Naive thymus-derived CD4-positive, alpha-beta T cell (primary cell): ENCODE measurements at regions of chr4 and their contacts with region 1.

Region 1: DNA sequence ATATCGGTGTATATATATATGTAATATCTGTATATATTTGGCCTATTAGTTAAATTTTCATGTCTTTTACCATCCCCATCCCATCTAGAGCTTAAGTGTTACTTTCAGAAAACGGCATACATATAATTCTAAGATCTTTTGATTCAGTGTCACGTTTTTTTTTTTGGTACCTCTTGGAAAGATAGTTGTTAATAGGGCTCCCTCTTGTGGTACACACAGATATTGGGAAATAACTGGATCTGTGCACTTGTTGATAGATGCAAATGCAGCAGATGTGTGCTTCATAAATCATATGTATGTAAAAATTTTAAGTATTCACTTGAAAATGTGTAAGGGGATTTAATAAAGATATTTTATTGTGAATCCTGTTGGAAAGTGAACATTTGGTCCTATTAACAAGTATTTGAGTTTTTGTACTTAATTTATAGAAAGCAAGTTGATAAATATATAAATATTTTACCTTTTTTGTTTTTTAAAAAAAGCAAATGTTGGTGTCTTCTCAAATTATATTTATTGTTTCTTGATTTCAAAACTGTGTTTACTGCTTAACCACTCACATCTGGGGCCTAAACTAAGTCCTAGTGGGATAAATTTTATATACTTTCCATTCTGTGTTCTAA is 74.7 kb downstream of the PAQR3 start:
- DNase-seq: peak in 7 of 9 donors; percentile 55 to 79 (median 70)
- ATAC-seq: peak; percentile 81
- H3K4me3 ChIP-seq: no peak overlapping the region
- H3K4me3 Mint-ChIP-seq: no peak overlapping the region
- H3K27ac ChIP-seq: no peak overlapping the region
- H3K27ac Mint-ChIP-seq: peak overlapping the region in 1 of 9 donors; percentile 33
- H3K4me1 ChIP-seq: no peaks in the 10 kb centered on the region
- H3K4me1 Mint-ChIP-seq: peaks cover 0 to 6% (median 4%) of the 10 kb centered on the region in 7 donors
- H3K27me3 ChIP-seq: no peaks in the 10 kb centered on the region
- H3K27me3 Mint-ChIP-seq: no peaks in the 10 kb centered on the region

Region 2: GRCh38 chr4:77959566-77960338 is 904.8 kb before region 1 on chr4:
- CTCF ChIA-PET with region 1: interaction called, 3 read pairs
- POLR2A ChIA-PET with region 1: no interaction called
- intact Hi-C with region 1: loop called (anchors 1 kb)
- DNase-seq: peak in 5 of 9 donors; percentile 10 to 40 (median 24)
- ATAC-seq: no peak
- H3K4me3 ChIP-seq: no peak overlapping the region
- H3K4me3 Mint-ChIP-seq: no peak overlapping the region
- H3K27ac ChIP-seq: no peak overlapping the region
- H3K27ac Mint-ChIP-seq: no peak overlapping the region
- H3K4me1 ChIP-seq: no peaks in the 10 kb centered on the region
- H3K4me1 Mint-ChIP-seq: peaks cover 0 to 8% (median 6%) of the 10 kb centered on the region in 7 donors
- H3K27me3 ChIP-seq: no peaks in the 10 kb centered on the region
- H3K27me3 Mint-ChIP-seq: peaks cover 0 to 3% (median 0%) of the 10 kb centered on the region in 5 donors

Region 3: GRCh38 chr4:78056265-78057129 is 808.0 kb before region 1 on chr4:
- CTCF ChIA-PET with region 1: no interaction called
- POLR2A ChIA-PET with region 1: no interaction called
- intact Hi-C with region 1: loop called (anchors 5 to 10 kb)
- DNase-seq: peak in 5 of 9 donors; percentile 10 to 30 (median 17)
- ATAC-seq: peak; percentile 51
- H3K4me3 ChIP-seq: peak overlapping the region; percentile 57
- H3K4me3 Mint-ChIP-seq: peak overlapping the region; percentile 84 to 96 (median 86)
- H3K27ac ChIP-seq: no peak overlapping the region
- H3K27ac Mint-ChIP-seq: peak overlapping the region in 1 of 9 donors; percentile 16
- H3K4me1 ChIP-seq: peaks cover 10 to 14% of the 10 kb centered on the region in 2 donors
- H3K4me1 Mint-ChIP-seq: peaks cover 24 to 33% (median 26%) of the 10 kb centered on the region in 7 donors
- H3K27me3 ChIP-seq: peaks cover 3 to 18% of the 10 kb centered on the region in 2 donors
- H3K27me3 Mint-ChIP-seq: peaks cover 66 to 78% (median 69%) of the 10 kb centered on the region in 5 donors

Region 4: DNA sequence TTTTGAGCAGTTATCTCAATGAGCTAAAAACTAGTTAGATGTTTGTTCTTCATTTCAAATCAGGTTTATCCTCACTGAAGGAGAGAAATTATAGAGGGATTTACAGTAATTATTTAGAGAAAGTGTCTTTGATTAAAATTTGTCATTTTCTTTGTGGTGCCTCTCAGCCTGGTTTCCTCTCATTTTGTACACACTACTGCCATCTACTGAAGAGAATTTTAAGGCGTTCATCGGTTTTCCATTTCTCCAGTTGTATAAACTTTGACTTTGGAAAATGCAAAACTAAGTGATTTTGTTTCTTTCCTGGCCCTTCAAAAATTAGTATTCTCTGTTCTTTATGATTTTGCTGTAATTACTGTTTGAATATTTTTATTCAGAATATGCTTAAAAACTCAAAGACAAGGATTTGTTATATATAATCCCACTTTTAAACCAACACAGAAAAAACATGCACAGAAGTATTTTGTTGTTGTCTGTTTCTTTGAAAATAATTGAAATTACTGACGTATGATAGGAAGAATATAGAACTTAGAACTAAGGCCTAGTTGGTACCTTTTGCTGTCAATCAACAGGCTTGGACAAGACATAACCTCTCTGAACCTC is 347.4 kb before region 1 on chr4:
- CTCF ChIA-PET with region 1: no interaction called
- POLR2A ChIA-PET with region 1: no interaction called
- intact Hi-C with region 1: loop called (anchors 10 kb)
- DNase-seq: no peak
- ATAC-seq: no peak
- H3K4me3 ChIP-seq: no peak overlapping the region
- H3K4me3 Mint-ChIP-seq: no peak overlapping the region
- H3K27ac ChIP-seq: no peak overlapping the region
- H3K27ac Mint-ChIP-seq: no peak overlapping the region
- H3K4me1 ChIP-seq: no peaks in the 10 kb centered on the region
- H3K4me1 Mint-ChIP-seq: no peaks in the 10 kb centered on the region
- H3K27me3 ChIP-seq: no peaks in the 10 kb centered on the region
- H3K27me3 Mint-ChIP-seq: peaks cover 0 to 29% (median 6%) of the 10 kb centered on the region in 5 donors

Region 5: DNA sequence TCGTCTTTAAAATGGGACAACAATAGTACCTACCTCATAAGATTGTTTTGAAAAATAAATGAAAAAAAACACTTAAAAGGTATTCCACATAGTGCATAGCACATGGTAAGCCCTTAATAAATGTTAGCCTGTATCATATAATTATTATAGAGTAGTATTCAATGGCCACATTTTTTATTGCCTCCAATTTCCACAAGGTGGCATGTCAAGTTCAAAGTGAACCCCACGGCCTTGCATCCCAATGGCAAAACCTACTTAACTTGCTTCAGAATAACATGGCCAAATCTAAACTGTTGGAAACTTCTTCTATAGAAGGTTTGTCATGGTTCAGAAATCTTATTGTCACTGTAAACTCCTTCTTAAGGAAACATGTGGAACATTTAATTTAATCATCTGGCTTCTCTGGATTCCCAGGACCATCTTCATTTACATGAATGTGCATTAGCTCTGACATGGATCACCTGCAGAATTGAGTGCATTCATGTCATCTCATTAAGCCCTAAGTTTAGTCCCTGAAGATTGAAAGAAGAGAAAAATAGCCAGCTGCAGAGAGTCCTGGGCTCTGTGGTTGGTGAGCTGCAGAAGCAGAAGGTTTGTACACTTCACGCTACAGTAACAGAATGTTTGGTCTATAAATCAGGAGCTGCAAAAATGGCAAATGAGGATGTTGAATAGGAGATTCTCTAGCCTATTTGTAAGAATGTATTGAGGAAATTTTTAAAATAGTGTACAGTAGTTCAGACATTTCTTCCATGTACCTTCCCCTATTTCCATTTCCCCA is 251.9 kb before region 1 on chr4:
- CTCF ChIA-PET with region 1: interaction called, 8 read pairs
- POLR2A ChIA-PET with region 1: no interaction called
- intact Hi-C with region 1: loop called (anchors 1 kb)
- DNase-seq: no peak
- ATAC-seq: peak; percentile 47
- H3K4me3 ChIP-seq: no peak overlapping the region
- H3K4me3 Mint-ChIP-seq: peak overlapping the region in 1 of 10 donors; percentile 39
- H3K27ac ChIP-seq: no peak overlapping the region
- H3K27ac Mint-ChIP-seq: peak overlapping the region in 4 of 9 donors; percentile 16 to 66 (median 57)
- H3K4me1 ChIP-seq: peaks cover 0 to 36% of the 10 kb centered on the region in 2 donors
- H3K4me1 Mint-ChIP-seq: peaks cover 13 to 76% (median 55%) of the 10 kb centered on the region in 7 donors
- H3K27me3 ChIP-seq: no peaks in the 10 kb centered on the region
- H3K27me3 Mint-ChIP-seq: no peaks in the 10 kb centered on the region

Region 6: GRCh38 chr4:78720994-78721677 is 143.4 kb before region 1 on chr4:
- CTCF ChIA-PET with region 1: no interaction called
- POLR2A ChIA-PET with region 1: no interaction called
- intact Hi-C with region 1: loop called in 1 of 2 experiments (anchors 5 kb)
- DNase-seq: peak in 8 of 9 donors; percentile 11 to 38 (median 24)
- ATAC-seq: peak; percentile 68
- H3K4me3 ChIP-seq: peak overlapping the region; percentile 24
- H3K4me3 Mint-ChIP-seq: peak overlapping the region; percentile 43 to 79 (median 70)
- H3K27ac ChIP-seq: no peak overlapping the region
- H3K27ac Mint-ChIP-seq: peak overlapping the region in 8 of 9 donors; percentile 4 to 76 (median 48)
- H3K4me1 ChIP-seq: peaks cover 0 to 12% of the 10 kb centered on the region in 2 donors
- H3K4me1 Mint-ChIP-seq: peaks cover 7 to 21% (median 18%) of the 10 kb centered on the region in 7 donors
- H3K27me3 ChIP-seq: no peaks in the 10 kb centered on the region
- H3K27me3 Mint-ChIP-seq: peaks cover 0 to 2% (median 0%) of the 10 kb centered on the region in 5 donors